Cardiac septum (tissue), 1 donor: ENCODE measurements at regions of chr16 and their contacts with region 1.

Region 1: DNA sequence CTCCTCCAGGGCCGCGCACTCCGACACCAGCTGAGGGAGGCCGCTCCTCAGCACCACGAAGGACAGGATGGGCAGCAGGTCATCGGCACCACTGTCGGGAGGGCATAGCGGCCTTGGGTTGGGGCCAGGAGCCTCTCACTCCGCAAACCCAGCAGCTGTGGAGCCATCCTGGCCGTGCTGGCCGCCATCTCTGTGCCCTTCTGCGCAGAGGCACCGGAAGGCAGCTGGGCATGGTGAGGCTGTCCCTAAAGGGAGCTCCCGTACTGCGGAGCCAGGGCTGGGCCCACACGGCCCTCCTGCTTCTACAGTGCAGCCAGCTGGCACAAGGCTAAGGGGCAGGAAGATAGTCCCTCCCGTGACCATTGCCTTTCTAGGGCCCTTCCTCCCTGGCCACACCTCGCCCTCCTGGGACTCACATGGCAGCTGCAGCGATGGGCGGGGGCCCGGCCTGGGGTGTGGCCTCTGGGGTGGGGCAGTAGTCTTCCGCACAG is 7.0 kb upstream of the SPATA2L start:
- DNase-seq: no peak

Region 2: DNA sequence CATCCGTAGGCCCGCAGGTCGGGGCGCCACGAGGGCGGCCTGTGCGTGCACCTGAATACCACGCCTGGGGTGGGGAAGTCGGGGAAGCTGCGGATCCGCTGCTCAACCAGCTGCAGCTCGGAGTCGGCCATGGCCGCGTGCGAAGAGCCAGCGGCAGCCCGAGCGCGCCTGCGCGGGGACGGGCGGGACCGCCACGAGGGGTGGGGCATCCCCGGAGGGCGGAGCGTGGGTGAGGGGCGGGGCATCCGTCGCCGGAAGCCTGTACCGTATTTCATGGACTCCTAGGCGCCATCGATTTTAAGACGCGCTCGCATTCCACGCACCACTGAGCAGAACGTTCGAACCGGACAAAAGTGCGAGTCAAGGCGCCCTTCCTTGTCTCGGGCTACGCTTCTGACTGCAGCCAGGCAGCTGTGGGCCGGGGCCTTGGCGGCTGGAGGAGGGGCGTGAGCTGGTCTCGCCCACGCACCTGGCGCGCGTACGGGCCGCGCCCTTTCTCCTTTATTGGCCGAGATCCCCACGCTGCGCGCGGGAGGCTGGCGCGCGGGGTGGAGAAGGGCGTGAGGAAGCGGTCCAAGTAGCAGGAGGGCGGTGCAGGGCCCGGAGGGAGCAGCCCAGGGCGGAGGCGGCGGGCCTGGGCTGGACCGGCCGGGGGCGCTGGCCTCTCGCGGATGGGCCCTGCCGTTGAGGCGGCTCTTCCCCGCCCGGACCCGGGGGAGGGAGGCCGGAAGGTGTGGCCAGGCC is 896.5 kb before region 1 on chr16 and contains the start of gene APRT:
- intact Hi-C with region 1: no loop called
- DNase-seq: peak; percentile 98
- total RNA-seq, gene APRT: 46.6 TPM

Region 3: DNA sequence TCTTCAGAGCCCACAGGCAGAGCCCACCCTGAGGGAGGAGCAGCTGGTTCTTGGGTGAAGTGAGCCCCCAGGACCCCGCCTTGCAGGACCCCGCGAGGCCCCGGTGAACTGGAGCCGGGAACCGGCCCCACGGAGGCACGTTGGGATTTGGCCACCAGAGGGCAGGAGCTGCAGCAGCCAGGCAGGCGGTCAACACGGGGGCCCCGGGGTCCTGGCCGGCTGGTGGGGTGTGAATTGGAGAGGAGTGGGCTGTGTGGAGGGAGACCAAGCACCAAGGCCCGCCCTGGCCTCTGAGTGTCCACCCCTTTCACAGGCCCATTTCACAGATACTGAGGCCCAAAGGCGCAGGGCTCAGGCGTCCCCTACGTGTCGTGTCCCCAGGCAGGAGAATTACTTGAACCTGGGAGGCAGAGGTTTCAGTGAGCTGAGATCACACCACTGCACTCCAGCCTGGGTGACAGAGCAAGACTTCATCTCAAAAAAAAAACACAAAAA is 92.8 kb before region 1 on chr16:
- intact Hi-C with region 1: no loop called
- DNase-seq: no peak

Region 4: DNA sequence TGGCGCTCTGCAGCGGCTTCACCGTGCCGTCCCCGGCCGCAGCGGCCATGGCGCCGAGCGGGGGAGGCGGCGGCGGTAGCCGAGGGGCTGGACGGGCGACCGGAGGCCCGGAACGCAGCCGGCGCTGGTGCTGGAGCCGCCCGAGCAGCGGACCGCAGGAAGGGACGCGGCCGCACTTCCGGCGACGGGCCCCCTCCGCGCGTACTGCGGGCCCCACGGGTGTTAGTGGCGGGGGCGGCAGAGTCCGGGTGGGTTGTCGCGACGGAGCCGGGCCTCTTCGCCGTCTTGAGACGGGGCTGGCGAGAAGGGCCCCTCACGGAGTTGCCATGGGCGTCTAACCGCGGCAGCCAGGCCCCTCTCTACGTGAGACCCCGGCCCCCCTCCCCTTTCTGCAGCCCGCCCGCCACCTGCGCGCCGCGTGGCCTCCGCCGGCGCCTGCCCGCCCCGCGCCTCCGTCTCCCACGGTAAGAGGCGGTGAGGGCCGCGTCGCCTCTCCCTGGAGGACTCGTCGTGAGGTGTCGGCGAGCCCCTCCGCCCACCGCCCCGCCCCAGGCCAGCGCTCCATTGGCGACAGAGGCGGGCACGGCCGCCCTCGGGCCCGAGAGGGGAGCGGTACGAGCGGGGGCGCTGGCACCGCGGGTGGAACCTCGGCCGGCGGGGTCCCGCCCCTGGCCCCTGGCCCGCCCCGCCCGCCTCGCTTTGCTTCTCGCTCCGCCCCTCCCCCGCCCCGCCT is 12.5 kb after region 1 on chr16 and contains the starts of genes VPS9D1 and ZNF276:
- intact Hi-C with region 1: loop called (anchors 2 kb)
- DNase-seq: peak; percentile 93
- total RNA-seq, gene VPS9D1: 19.7 TPM
- total RNA-seq, gene ZNF276: 17.5 TPM

Region 5: DNA sequence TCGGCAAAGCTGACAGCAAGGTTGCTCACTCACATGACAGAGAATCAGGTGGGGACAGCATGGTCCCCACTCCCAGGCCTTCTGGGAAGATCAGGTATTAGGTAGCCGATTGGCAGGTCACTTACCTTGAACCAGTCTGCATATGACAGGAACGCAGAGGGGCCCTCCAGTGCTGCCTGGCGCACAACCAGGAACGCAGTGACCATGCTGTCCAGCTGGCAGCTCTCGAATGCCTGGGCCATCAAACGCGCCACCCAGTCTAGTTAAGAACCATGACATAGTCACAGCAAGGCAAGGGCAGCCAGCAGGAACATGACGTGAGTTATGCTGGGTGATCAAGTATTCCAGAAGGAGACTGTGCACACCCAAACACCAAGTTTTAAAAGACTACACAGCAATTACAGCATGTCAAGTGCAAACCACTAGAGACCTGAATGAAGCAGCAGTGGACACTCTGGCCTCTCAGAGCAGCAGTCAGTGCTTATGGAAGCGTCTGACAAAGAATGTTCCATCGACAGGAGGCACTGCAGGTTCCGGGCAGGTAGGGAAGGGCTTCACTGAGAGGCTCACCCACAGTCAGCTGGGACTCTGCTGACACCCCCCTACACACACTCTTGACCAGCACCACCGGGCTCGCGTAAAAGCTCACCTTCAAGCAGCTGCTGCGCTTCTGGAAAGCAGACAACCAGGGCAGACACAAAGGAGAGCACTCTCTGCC is 83.0 kb after region 1 on chr16:
- intact Hi-C with region 1: loop called (anchors 5 kb)
- DNase-seq: no peak

Region 6: GRCh38 chr16:89815639-89816348 is 107.3 kb after region 1 on chr16:
- intact Hi-C with region 1: no loop called
- DNase-seq: no peak